Posterior vena cava (tissue), 2 donors: ENCODE measurements at regions of chr2 and their contacts with region 1.

Region 1: DNA sequence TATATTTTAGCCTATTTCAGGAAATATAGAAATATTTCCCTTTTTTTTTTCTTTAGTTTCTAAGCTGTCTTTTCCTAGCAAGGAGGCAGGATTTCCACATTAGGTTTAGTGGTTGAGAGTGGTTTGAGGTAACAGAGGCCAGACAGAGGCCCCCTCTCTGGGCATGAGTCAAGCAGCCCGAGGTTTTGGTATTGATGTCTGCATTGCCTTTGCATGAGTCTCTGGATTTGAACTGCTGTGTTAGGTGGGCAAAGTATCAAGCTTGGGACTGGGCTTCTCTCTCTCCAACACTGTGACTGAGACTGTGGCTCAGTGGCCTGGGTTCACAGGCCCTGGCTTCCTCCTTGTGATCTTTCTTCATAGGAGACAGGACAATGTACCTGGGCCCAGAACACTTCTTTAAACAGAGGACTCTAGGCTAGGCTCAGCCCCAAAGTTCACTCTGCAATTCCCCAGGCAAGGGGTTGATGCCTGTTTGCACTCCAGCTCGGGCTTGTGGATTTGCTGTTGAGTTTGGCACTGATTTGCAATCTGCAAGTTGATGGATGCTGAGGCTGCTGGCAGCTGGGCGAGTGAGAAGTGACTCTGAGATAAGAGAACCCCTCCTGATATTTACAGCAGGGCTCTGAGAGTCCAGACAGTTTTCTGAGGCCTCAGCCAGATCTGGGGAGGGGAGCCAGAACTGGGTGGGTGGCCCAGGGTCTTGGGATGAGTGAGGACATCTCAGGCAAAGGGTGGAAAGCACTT is 271.2 kb downstream of the EN1 start:
- DNase-seq: no peak

Region 2: GRCh38 chr2:118371515-118371914 is 204.8 kb before region 1 on chr2:
- intact Hi-C with region 1: no loop called
- DNase-seq: no peak

Region 3: DNA sequence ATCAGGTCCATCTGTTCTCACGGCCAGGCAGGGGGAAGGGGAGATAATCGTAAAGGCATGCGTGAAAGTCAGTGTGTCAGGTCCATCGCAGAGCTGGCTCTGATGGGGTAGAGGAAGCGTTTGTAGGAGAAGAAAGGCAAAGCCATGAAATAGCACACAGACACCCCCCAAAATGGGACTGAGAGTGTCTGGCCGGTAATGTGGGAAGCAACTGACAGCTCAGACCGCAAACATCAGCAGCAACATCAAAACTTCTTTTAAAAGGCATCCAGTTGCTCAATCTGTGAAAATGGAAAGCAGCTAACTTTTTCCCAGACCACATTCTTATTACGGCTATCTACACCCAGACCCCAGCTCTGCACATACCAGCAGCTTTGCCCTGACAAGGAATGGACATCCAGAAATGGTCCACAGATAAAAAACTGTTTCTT is 38.6 kb after region 1 on chr2:
- intact Hi-C with region 1: loop called in 1 of 2 experiments (anchors 1 kb)
- DNase-seq: no peak

Region 4: GRCh38 chr2:118632921-118633320 is 56.6 kb after region 1 on chr2:
- intact Hi-C with region 1: no loop called
- DNase-seq: no peak